Activated T-helper 1 cell treated with anti-CD3 and anti-CD28 coated beads, Interleukin-12 subunit alpha, Interleukin-12 subunit beta, Interleukin-2, Interleukin-4 antibody, amounts not matched to agents 30 ng/mL and 10 ng/mL and 1 ng/mL, durations not matched to agents 14 hours and 24 hours and 36 hours (primary cell): ENCODE measurements at regions of chr6 and their contacts with region 1.

Region 1: GRCh38 chr6:3748208-3749066 is 3.1 kb downstream of the PXDC1 start:
- DNase-seq: no peak
- H3K4me3 Mint-ChIP-seq: no peak overlapping the region
- H3K27ac Mint-ChIP-seq: no peak overlapping the region
- H3K4me1 Mint-ChIP-seq: peaks cover 6% of the 10 kb centered on the region
- H3K27me3 Mint-ChIP-seq: peaks cover 40% of the 10 kb centered on the region

Region 2: GRCh38 chr6:3929281-3929798 is 180.9 kb after region 1 on chr6:
- intact Hi-C with region 1: loop called (anchors 1 kb)
- DNase-seq: no peak
- H3K4me3 Mint-ChIP-seq: no peak overlapping the region
- H3K27ac Mint-ChIP-seq: no peak overlapping the region
- H3K4me1 Mint-ChIP-seq: no peaks in the 10 kb centered on the region
- H3K27me3 Mint-ChIP-seq: peaks cover 14% of the 10 kb centered on the region

Region 3: DNA sequence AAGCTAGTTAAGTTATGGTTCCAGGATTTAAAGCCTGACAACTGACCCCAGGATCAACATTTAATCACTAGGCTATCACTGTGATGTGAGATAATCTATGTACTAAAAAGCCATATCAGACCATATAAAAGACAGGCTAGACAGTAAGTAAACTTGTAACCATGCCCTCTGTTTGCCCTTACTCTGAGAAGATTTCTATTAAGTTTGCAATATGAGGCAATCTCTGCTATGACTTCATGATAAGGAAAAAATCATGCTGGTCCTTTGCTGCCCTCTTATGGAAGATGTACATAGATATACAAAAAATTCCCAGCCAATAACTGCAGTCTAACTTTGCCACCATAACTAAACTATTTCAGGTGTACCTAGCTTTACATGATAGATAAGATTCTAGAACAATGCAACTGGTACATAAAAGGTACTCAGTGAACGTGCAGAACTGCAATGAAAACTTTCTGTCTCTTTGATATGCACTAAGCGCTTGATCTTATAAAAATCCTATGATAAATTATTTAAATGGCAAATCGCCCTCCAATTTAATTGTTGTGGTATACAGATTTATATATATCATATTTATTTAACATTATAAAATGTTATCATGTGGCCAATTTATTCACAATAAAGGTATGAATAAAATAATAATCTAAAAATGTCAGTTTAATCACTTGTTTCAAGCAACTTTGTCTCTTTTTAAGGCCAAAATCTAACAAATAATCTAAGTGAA is 260.0 kb after region 1 on chr6:
- intact Hi-C with region 1: loop called (anchors 1 kb)
- DNase-seq: no peak
- H3K4me3 Mint-ChIP-seq: no peak overlapping the region
- H3K27ac Mint-ChIP-seq: no peak overlapping the region
- H3K4me1 Mint-ChIP-seq: peaks cover 59% of the 10 kb centered on the region
- H3K27me3 Mint-ChIP-seq: no peaks in the 10 kb centered on the region